Ovary (tissue), 10 donors: ENCODE measurements at regions of chr2 and their contacts with region 1.

Region 1: GRCh38 chr2:43484323-43484930 is 111.4 kb downstream of the THADA start:
- DNase-seq: no peak
- H3K4me3 ChIP-seq: no peak overlapping the region
- H3K27ac ChIP-seq: peak overlapping the region in 1 of 2 donors; percentile 49
- H3K4me1 ChIP-seq: peaks cover 4% of the 10 kb centered on the region
- H3K27me3 ChIP-seq: no peaks in the 10 kb centered on the region
- CTCF ChIP-seq: peak; percentile 35 to 91 (median 67)
- EP300 ChIP-seq: no peak
- POLR2A ChIP-seq: no peak

Region 2: DNA sequence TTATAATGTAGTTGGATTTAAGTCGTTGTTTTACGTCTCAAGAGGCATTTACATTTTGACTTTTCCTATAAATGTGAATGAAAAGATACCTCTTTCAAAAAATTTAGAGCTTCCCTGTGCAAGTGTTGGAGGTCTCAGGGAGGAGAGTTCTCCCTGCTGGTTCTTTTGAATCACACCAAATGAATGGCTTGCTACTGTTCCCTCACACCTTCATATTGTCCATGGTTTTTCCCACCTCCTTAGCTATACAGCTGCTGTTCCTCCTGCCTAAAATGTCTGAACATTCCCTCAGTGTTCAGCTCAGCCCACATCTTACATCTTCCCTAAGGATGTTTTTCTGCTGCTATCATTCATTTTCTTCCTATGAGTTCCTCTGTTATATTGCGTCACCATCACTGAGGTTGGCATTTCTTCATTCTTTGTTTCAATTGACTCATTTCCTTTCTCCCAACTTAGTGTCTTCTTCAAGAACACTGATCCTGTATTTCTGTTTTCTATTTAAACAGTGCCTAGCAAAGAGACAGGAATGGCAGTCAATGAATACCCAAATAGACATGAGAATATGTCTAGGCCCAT is 1169.4 kb before region 1 on chr2:
- intact Hi-C with region 1: loop called in 1 of 4 experiments (anchors 5 kb)
- DNase-seq: no peak
- H3K4me3 ChIP-seq: no peak overlapping the region
- H3K27ac ChIP-seq: no peak overlapping the region
- H3K4me1 ChIP-seq: no peaks in the 10 kb centered on the region
- H3K27me3 ChIP-seq: no peaks in the 10 kb centered on the region
- CTCF ChIP-seq: no peak
- EP300 ChIP-seq: no peak
- POLR2A ChIP-seq: no peak

Region 3: DNA sequence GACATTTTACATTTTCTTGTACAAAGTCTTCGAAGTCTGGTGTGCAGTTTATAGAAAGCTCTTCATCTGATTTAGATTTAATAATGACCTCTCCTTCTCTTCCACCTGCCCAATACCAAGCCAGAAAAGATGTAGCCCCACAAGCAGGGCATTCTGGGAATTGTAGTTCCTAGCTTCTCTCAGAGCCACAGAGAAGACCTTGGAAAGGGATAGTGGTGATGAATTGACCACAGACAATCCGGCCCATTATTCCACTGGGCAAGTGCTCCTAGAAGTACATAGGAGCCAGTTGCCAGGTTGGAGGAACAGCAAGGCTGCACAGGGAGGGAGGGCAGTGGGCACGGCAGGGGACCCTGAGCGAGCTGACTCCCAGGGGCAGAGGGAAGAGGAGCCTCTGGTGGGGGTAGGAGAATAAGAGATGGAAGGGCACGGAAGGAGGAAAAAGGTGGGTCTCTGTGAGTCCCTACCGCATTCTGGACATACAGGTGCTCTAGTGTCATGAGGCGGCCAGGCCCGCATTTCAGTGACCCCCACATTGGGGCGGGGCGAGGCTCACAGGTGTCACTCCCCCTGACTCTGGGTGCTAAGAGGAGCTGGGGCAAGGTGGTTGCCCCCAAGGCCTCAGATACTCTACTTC is 539.5 kb before region 1 on chr2:
- intact Hi-C with region 1: loop called (anchors 5 to 10 kb)
- DNase-seq: no peak
- H3K4me3 ChIP-seq: no peak overlapping the region
- H3K27ac ChIP-seq: no peak overlapping the region
- H3K4me1 ChIP-seq: peaks cover 18% of the 10 kb centered on the region
- H3K27me3 ChIP-seq: no peaks in the 10 kb centered on the region
- CTCF ChIP-seq: no peak
- EP300 ChIP-seq: no peak
- POLR2A ChIP-seq: no peak

Region 4: DNA sequence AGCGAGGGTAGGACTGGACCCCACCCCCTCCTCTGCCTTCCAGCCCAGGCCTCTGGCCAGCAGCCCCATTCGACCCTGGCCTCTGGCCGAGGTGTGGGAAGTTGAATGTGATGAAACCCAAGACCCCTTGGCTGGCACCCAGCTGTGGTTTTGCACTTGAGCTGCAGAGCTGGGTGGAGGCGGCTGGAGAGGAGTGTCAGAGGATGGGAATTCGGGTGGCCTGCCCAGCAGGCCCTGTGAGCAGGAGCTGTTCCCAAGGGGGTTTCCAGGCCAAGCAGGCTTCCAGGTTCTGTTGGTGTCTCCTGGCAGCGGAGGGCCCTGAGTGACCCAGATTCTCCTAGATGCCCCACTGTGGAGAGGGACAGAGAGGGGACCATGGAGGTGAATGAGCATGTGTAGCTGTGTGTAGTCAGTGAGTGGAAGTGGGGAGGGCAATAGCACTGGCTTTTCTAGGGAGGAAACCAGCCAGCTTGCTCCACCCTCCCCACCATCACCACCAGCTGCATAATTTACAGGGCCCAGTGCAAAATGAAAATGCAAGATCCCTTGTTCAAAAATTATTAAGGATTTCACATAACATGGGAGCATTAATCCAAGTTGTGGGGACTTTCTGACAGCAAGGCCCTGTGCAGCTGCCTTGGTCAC is 519.9 kb before region 1 on chr2:
- intact Hi-C with region 1: loop called in 1 of 4 experiments (anchors 5 kb)
- DNase-seq: peak; percentile 71 to 80 (median 78)
- H3K4me3 ChIP-seq: no peak overlapping the region
- H3K27ac ChIP-seq: peak overlapping the region in 1 of 2 donors; percentile 94
- H3K4me1 ChIP-seq: peaks cover 51% of the 10 kb centered on the region
- H3K27me3 ChIP-seq: no peaks in the 10 kb centered on the region
- CTCF ChIP-seq: no peak
- EP300 ChIP-seq: no peak
- POLR2A ChIP-seq: no peak

Region 5: GRCh38 chr2:43537137-43537536 is 52.7 kb after region 1 on chr2:
- intact Hi-C with region 1: loop called in 1 of 4 experiments (anchors 10 kb)
- DNase-seq: no peak
- H3K4me3 ChIP-seq: no peak overlapping the region
- H3K27ac ChIP-seq: no peak overlapping the region
- H3K4me1 ChIP-seq: peaks cover 8% of the 10 kb centered on the region
- H3K27me3 ChIP-seq: no peaks in the 10 kb centered on the region
- CTCF ChIP-seq: no peak
- EP300 ChIP-seq: no peak
- POLR2A ChIP-seq: no peak